Aorta (tissue), 5 donors: ENCODE measurements at regions of chr2 and their contacts with region 1.

Region 1: GRCh38 chr2:216974321-216975302 is 114.7 kb upstream of the TNP1 start:
- DNase-seq: peak in 1 of 2 donors; percentile 69
- ATAC-seq: peak; percentile 82
- H3K4me3 ChIP-seq: no peak overlapping the region
- H3K27ac ChIP-seq: peak overlapping the region; percentile 57 to 88
- H3K4me1 ChIP-seq: peaks cover 12 to 31% of the 10 kb centered on the region in 2 donors
- H3K27me3 ChIP-seq: no peaks in the 10 kb centered on the region

Region 2: GRCh38 chr2:216777650-216778273 is 196.8 kb before region 1 on chr2:
- intact Hi-C with region 1: loop called in 1 of 2 experiments (anchors 10 kb)
- DNase-seq: no peak
- ATAC-seq: no peak
- H3K4me3 ChIP-seq: no peak overlapping the region
- H3K27ac ChIP-seq: no peak overlapping the region
- H3K4me1 ChIP-seq: peaks cover 0 to 1% of the 10 kb centered on the region in 2 donors
- H3K27me3 ChIP-seq: no peaks in the 10 kb centered on the region

Region 3: GRCh38 chr2:216860426-216861137 is 114.0 kb before region 1 on chr2:
- intact Hi-C with region 1: no loop called
- DNase-seq: no peak
- ATAC-seq: no peak
- H3K4me3 ChIP-seq: no peak overlapping the region
- H3K27ac ChIP-seq: no peak overlapping the region
- H3K4me1 ChIP-seq: no peaks in the 10 kb centered on the region
- H3K27me3 ChIP-seq: no peaks in the 10 kb centered on the region

Region 4: DNA sequence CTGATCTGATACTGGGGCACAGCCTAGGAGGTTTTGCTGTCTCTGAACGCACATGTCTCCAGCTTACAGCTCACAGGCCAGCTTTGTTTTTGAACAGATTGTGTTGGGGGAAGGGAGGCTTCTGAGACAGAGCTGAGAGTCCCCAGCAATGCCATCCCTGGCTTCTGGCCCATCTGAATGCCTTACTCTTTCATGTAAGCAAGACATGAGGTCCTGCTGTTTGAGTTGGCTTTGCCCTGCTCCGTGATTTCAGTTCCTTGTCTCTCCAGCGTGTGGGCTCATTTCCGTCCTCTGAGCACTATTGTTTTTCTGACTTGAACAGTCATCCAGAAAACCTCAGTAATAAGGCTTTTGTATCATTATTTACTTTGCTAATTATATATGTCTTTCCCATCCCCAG is 80.2 kb after region 1 on chr2:
- intact Hi-C with region 1: loop called in 1 of 2 experiments (anchors 10 kb)
- DNase-seq: peak in 1 of 2 donors; percentile 73
- ATAC-seq: no peak
- H3K4me3 ChIP-seq: no peak overlapping the region
- H3K27ac ChIP-seq: peak overlapping the region; percentile 95 to 96
- H3K4me1 ChIP-seq: peaks cover 6 to 12% of the 10 kb centered on the region in 2 donors
- H3K27me3 ChIP-seq: no peaks in the 10 kb centered on the region

Region 5: DNA sequence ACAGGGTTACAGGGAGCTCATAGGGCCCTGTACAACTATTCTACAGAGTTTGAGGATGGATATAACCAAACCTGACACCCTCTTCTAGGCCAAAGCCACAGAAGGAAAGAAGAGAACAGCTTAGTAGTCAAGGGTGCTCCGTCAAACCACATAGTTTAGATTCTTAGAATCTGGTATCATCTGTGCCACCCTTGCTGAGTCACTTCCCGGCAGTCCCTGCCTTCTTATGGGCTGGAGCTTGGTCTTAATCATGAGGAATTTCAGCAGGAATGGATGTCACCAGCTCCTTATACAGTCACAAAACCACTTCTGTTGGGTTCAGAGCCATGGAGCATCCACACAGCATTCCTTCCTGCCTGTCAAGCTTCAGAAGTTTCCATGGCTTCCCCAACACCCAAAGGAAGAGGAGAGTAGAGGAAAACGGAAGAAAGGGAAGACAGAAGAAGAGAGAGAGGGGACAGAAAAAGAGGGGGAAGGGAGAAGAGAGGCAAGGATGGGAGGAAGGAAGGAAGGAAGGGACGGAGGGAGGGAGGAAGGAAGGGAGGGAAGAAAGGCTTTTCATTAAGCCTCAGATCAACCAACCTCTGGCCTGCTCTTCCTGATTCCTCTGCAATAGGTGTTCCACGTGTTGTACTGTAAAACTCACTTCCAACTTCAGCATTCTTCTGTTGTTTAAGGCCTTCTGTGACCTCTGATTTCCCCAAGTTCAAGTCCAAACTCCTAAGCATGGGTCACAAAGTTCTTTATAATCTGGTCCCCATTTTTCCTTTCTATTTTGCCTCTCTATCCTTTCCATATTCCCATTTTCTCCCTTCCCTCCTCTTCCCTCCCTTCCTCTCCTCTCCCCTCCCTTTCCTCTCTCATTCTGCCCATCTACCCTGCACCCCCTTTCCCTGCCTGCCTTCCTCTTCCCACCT is 131.4 kb after region 1 on chr2:
- intact Hi-C with region 1: loop called in 1 of 2 experiments (anchors 10 kb)
- DNase-seq: peak; percentile 80 to 88
- ATAC-seq: peak; percentile 76
- H3K4me3 ChIP-seq: no peak overlapping the region
- H3K27ac ChIP-seq: peak overlapping the region; percentile 95 to 99
- H3K4me1 ChIP-seq: peaks cover 0 to 5% of the 10 kb centered on the region in 2 donors
- H3K27me3 ChIP-seq: no peaks in the 10 kb centered on the region

Region 6: GRCh38 chr2:217166241-217166850 is 191.7 kb after region 1 on chr2:
- intact Hi-C with region 1: loop called in 1 of 2 experiments (anchors 10 kb)
- DNase-seq: no peak
- ATAC-seq: peak; percentile 81
- H3K4me3 ChIP-seq: no peak overlapping the region
- H3K27ac ChIP-seq: no peak overlapping the region
- H3K4me1 ChIP-seq: no peaks in the 10 kb centered on the region
- H3K27me3 ChIP-seq: no peaks in the 10 kb centered on the region

Region 7: GRCh38 chr2:217360781-217361482 is 386.3 kb after region 1 on chr2:
- intact Hi-C with region 1: loop called in 1 of 2 experiments (anchors 10 kb)
- DNase-seq: peak in 1 of 2 donors; percentile 64
- ATAC-seq: peak; percentile 79
- H3K4me3 ChIP-seq: no peak overlapping the region
- H3K27ac ChIP-seq: peak overlapping the region; percentile 92 to 94
- H3K4me1 ChIP-seq: peaks cover 15 to 21% of the 10 kb centered on the region in 2 donors
- H3K27me3 ChIP-seq: no peaks in the 10 kb centered on the region